GM13977 (cell line): ENCODE measurements at regions of chr5 and their contacts with region 1.

Region 1: GRCh38 chr5:140084541-140084940 is 29.4 kb upstream of the PURA start:
- DNase-seq: no peak
- CTCF ChIP-seq: no peak

Region 2: GRCh38 chr5:140151730-140152597 is 67.4 kb after region 1 on chr5:
- in situ Hi-C with region 1: loop called (anchors 5 kb)
- DNase-seq: no peak
- CTCF ChIP-seq: no peak